ENCODE measurements at regions of chr6 and their contacts with region 1.

Region 1: DNA sequence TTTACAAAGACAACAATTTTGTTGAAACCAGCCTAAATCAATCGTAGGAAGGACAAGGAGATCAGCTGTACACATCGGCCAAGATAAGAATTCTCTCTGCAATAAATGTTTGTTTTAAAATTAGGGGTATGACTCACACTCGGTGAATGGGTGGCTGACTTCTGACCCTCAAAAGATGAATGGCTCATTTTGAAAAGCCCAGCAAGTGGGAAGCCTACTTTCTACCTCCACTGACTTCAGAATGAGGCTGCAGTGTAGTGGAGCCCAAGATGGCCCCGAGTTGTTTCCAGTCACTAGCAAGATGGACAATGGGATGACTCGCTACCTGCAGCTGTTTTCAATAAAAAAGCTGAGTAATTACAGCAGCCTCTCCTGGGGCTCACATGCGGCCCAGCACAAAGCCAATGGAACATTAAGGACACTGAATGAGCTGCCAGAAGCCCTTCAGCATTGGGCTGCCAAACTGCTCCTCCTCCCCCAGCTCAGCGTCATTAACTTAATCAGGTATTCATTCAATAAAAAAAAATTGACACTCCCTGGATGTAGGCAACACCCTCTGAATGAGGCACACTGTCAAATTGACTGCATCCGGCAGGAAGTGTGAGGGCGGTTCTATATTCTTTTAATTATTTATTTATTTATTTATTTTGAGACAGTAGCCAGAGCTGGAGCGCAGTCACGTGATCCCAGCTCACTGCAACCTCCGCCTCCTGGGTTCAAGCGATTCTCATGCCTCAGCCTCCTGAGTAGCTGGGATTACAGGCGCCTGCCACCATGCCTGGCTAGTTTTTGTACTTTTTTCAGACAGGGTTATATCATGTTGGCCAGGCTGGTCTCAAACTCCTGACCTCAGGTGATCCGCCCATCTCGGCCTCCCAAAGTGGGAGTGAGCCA is 107.3 kb downstream of the GMPR start:
- DNase-seq: peak; percentile 74 to 84
- H3K4me3 ChIP-seq: no peak overlapping the region
- H3K27ac ChIP-seq: peak overlapping the region; percentile 72 to 80
- H3K4me1 ChIP-seq: peaks cover 0 to 5% of the 10 kb centered on the region in 2 donors
- H3K27me3 ChIP-seq: no peaks in the 10 kb centered on the region
- CTCF ChIP-seq: no peak
- POLR2A ChIP-seq: no peak

Region 2: GRCh38 chr6:15638373-15638772 is 707.3 kb before region 1 on chr6:
- intact Hi-C with region 1: no loop called
- DNase-seq: no peak
- H3K4me3 ChIP-seq: no peak overlapping the region
- H3K27ac ChIP-seq: no peak overlapping the region
- H3K4me1 ChIP-seq: no peaks in the 10 kb centered on the region
- H3K27me3 ChIP-seq: no peaks in the 10 kb centered on the region
- CTCF ChIP-seq: no peak
- POLR2A ChIP-seq: no peak

Region 3: GRCh38 chr6:16205377-16206144 is 140.1 kb before region 1 on chr6:
- intact Hi-C with region 1: no loop called
- DNase-seq: no peak
- H3K4me3 ChIP-seq: no peak overlapping the region
- H3K27ac ChIP-seq: peak overlapping the region; percentile 1 to 45
- H3K4me1 ChIP-seq: peaks cover 0 to 3% of the 10 kb centered on the region in 2 donors
- H3K27me3 ChIP-seq: no peaks in the 10 kb centered on the region
- CTCF ChIP-seq: no peak
- POLR2A ChIP-seq: no peak

Region 4: DNA sequence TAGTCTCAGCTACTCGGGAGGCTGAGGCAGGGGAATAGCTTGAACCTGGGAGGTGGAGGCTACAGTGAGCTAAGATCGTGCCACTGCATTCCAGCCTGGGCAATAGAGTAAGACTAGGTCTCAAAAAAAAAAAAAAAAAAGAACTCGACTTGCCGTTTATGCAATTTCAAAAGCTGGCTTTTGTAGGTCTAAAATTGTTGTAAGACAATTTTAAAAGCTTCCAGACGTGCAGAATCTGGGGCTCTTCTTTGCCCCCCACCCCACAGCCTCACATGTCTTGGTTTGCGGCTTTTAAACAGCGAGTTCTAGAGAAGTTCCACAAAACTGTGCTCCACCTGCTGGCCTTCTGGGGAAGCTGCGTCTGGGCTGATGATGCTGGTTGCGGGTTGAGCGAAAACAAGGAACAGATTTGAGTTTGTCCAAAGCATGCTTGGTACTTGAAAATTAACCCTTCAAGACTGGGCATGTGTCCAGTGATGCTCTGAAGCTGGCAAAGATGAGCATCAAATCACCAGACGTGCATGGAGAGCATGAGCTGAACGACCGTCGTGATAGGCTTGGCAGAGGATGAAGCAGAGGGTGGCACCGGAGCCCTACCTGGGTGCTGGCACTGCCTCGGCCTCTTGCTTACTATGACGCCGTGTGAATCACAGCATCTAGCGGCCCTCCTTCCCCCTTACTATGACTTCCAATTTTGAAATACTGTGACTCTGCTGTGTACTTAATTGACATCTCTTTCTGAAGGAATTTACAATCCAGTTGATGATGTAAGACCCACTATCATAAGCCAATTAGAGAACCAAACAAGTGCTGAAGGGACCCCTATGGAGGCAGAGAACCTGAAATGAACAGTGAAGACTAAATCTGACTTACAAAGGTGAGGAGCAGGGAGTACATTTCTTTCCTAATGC is 64.1 kb after region 1 on chr6:
- intact Hi-C with region 1: loop called (anchors 10 kb)
- DNase-seq: peak; percentile 65 to 70
- H3K4me3 ChIP-seq: no peak overlapping the region
- H3K27ac ChIP-seq: peak overlapping the region in 1 of 2 donors; percentile 26
- H3K4me1 ChIP-seq: peaks cover 4 to 10% of the 10 kb centered on the region in 2 donors
- H3K27me3 ChIP-seq: no peaks in the 10 kb centered on the region
- CTCF ChIP-seq: peak; percentile 63 to 80 (median 70)
- POLR2A ChIP-seq: no peak

Region 5: DNA sequence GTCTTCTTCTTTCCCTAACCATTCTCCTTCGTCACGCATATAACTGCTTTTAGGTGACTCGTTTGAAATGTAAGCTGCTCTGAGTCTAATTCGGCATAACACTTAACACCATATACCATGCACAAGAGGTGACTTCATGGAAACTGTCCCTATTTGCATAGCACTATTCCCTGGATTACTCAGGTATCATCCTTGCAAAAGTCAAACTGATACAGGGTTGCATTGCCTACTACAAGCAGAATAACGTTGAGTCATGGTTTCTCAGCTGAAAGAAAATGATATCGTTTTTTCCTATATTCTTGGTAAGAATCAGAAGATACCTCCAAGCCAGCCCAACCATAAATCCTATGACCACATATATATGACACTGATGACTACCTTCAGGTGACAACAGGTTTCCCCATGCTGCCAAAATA is 188.0 kb after region 1 on chr6:
- intact Hi-C with region 1: no loop called
- DNase-seq: no peak
- H3K4me3 ChIP-seq: no peak overlapping the region
- H3K27ac ChIP-seq: no peak overlapping the region
- H3K4me1 ChIP-seq: no peaks in the 10 kb centered on the region
- H3K27me3 ChIP-seq: no peaks in the 10 kb centered on the region
- CTCF ChIP-seq: no peak
- POLR2A ChIP-seq: no peak

Measured in uterus (tissue), 4 donors.